CD8-positive, alpha-beta memory T cell (primary cell): ENCODE measurements at regions of chr14 and their contacts with region 1.

Region 1: DNA sequence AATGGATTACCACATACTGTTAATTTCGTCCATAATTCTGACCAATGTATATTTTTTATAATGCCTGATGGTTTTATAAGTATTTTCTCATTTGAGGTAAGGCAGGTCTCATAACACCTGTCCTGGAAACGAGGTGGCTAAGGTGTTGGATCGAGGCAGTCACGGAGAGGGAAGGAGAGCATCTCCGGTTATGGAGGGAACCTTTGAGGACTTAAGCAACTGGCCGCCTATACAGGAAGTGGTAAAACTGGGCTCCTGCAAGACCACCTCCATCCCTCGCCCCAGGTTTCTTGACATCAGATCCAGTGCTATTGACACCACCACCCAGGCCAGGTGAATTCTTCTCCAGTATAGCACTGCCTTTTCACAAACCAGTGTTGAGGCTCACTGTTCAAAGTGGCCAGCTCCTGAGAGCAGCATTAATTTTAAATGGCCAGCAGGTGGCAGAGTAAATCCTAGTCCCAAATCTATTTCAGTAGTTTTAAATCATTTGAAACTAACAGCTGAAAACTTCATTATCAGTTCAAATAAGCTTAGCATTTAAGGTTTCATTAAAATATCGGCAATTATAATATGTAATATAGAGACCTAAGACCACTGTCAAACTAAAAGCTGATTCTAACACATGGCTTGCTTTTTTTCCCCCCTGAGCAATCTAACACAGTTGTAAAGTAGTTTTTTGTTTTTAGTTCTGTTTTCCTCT is 100.8 kb downstream of the PPM1A start:
- DNase-seq: peak in 1 of 5 donors; percentile 18
- H3K4me3 ChIP-seq: no peak overlapping the region
- H3K4me3 Mint-ChIP-seq: no peak overlapping the region
- H3K27ac ChIP-seq: no peak overlapping the region
- H3K27ac Mint-ChIP-seq: no peak overlapping the region
- H3K4me1 ChIP-seq: no peaks in the 10 kb centered on the region
- H3K4me1 Mint-ChIP-seq: peaks cover 0 to 6% (median 4%) of the 10 kb centered on the region in 3 donors
- H3K27me3 ChIP-seq: no peaks in the 10 kb centered on the region
- H3K27me3 Mint-ChIP-seq: peaks cover 3 to 6% of the 10 kb centered on the region in 2 donors

Region 2: GRCh38 chr14:60133487-60133886 is 216.3 kb before region 1 on chr14:
- CTCF ChIA-PET with region 1: no interaction called
- POLR2A ChIA-PET with region 1: no interaction called
- DNase-seq: no peak
- H3K4me3 ChIP-seq: no peak overlapping the region
- H3K4me3 Mint-ChIP-seq: no peak overlapping the region
- H3K27ac ChIP-seq: no peak overlapping the region
- H3K27ac Mint-ChIP-seq: no peak overlapping the region
- H3K4me1 ChIP-seq: no peaks in the 10 kb centered on the region
- H3K4me1 Mint-ChIP-seq: peaks cover 0 to 6% (median 0%) of the 10 kb centered on the region in 3 donors
- H3K27me3 ChIP-seq: no peaks in the 10 kb centered on the region
- H3K27me3 Mint-ChIP-seq: no peaks in the 10 kb centered on the region

Region 3: DNA sequence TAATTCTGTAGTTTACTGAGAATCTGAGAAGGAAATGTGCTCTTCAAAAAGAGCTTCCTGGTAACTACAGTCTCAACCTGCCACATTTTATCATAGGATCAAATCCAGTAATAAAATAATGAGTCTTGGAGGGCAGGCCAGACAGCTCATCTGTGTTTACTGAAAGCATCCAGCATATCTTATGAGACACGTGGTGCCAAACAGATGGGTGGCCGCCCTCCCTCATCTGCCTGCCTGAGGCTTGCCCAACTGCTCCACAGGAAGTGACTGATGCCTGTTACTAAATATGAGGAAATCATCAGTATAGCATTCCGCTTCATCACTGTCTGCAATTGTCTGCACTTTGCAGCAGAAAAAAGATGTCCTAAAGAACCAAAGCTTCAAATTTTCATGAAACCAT is 198.1 kb before region 1 on chr14:
- CTCF ChIA-PET with region 1: no interaction called
- POLR2A ChIA-PET with region 1: no interaction called
- DNase-seq: peak; percentile 50 to 81 (median 63)
- H3K4me3 ChIP-seq: no peak overlapping the region
- H3K4me3 Mint-ChIP-seq: peak overlapping the region in 6 of 7 donors; percentile 14 to 57 (median 42)
- H3K27ac ChIP-seq: peak overlapping the region; percentile 30
- H3K27ac Mint-ChIP-seq: peak overlapping the region; percentile 83 to 97 (median 94)
- H3K4me1 ChIP-seq: peaks cover 38% of the 10 kb centered on the region
- H3K4me1 Mint-ChIP-seq: peaks cover 52 to 57% (median 53%) of the 10 kb centered on the region in 3 donors
- H3K27me3 ChIP-seq: no peaks in the 10 kb centered on the region
- H3K27me3 Mint-ChIP-seq: no peaks in the 10 kb centered on the region

Region 4: DNA sequence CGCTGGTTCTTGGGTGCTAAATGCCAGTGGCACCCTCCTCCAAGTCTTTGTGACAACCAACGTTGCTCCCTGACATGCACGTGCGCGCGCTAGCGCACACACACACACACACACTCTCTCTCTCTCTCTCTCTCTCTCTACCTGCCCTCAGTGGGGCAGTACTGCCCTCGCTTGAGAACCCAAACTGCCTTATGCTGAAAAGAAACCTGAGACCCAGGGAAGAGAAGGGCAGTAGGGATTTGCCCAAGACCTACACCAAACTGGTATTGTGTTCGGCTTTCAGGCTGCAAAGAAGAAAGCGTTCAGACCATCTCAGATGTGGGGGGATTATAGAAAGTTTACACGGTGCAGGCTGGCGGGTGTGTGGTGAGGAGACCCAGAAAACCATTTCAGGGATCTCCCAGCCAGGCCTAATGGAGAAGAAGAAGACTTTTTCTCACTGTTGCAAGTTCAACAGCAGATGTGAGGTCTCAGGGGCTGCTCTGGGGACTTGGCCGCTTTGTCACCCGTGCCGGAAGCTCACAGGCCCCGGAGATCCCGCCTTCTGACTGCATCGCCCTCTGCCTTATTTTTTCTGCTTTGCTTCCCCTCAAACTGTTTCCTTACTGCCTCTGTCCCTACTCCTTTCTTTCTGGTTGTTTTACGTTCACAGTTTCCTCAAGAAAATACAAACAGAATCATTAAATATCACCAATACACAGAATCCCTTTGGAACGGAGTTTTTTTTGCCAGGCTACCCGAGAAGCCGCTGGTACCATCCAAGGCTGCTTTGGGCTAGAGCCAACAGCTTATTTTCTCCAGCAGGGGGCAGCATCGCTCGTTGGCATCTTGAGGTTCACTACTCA is 18.4 kb before region 1 on chr14:
- CTCF ChIA-PET with region 1: interaction called, 10 read pairs
- POLR2A ChIA-PET with region 1: no interaction called
- DNase-seq: peak; percentile 62 to 80 (median 70)
- H3K4me3 ChIP-seq: peak overlapping the region; percentile 79
- H3K4me3 Mint-ChIP-seq: peak overlapping the region; percentile 91 to 99 (median 96)
- H3K27ac ChIP-seq: no peak overlapping the region
- H3K27ac Mint-ChIP-seq: peak overlapping the region; percentile 77 to 94 (median 89)
- H3K4me1 ChIP-seq: peaks cover 9% of the 10 kb centered on the region
- H3K4me1 Mint-ChIP-seq: peaks cover 22 to 36% (median 28%) of the 10 kb centered on the region in 3 donors
- H3K27me3 ChIP-seq: no peaks in the 10 kb centered on the region
- H3K27me3 Mint-ChIP-seq: peaks cover 36 to 60% of the 10 kb centered on the region in 2 donors

Region 5: DNA sequence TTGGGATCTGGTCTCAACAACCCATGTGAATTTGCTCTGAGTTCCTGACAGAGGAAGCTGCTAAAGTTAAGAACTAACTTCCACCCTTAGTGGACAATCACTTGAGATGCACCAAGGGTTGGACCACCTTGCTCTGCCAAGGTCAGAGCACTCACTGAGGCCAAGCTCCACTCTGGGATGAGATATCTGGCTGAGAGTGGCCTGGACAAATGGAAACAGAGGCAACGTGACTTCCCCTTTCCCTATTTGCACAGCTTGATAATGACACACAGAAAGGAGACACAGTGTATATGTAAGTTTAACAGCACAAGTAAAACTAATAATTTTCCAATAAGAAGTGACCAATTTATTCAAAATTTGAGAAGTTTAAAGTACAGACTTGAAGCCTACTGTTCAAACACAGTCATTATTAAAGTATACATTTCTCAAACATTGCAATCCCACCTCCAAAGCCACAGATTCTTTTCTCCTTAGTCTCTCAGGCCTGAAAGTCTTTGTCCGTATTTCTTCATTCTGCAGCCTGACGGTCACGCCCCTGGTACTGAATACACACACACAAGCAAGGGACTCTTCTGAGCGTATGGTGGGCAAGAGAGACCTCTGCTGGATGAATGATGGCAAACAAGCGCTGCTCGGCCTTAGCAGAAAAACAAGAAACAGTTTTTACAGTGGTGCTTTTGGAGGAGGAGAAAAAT is 902.7 kb after region 1 on chr14:
- CTCF ChIA-PET with region 1: interaction called, 13 read pairs
- POLR2A ChIA-PET with region 1: no interaction called
- DNase-seq: peak; percentile 21 to 64 (median 47)
- H3K4me3 ChIP-seq: no peak overlapping the region
- H3K4me3 Mint-ChIP-seq: no peak overlapping the region
- H3K27ac ChIP-seq: no peak overlapping the region
- H3K27ac Mint-ChIP-seq: no peak overlapping the region
- H3K4me1 ChIP-seq: no peaks in the 10 kb centered on the region
- H3K4me1 Mint-ChIP-seq: peaks cover 3 to 7% (median 4%) of the 10 kb centered on the region in 3 donors
- H3K27me3 ChIP-seq: no peaks in the 10 kb centered on the region
- H3K27me3 Mint-ChIP-seq: peaks cover 10 to 39% of the 10 kb centered on the region in 2 donors